ENCODE measurements at regions of chr4 and their contacts with region 1.

Region 1: GRCh38 chr4:3442959-3443749 is 1.4 kb downstream of the HGFAC start:
- DNase-seq: peak; percentile 51
- H3K4me3 Mint-ChIP-seq: no peak overlapping the region
- H3K27ac Mint-ChIP-seq: no peak overlapping the region
- H3K4me1 Mint-ChIP-seq: no peaks in the 10 kb centered on the region
- H3K27me3 Mint-ChIP-seq: no peaks in the 10 kb centered on the region

Region 2: DNA sequence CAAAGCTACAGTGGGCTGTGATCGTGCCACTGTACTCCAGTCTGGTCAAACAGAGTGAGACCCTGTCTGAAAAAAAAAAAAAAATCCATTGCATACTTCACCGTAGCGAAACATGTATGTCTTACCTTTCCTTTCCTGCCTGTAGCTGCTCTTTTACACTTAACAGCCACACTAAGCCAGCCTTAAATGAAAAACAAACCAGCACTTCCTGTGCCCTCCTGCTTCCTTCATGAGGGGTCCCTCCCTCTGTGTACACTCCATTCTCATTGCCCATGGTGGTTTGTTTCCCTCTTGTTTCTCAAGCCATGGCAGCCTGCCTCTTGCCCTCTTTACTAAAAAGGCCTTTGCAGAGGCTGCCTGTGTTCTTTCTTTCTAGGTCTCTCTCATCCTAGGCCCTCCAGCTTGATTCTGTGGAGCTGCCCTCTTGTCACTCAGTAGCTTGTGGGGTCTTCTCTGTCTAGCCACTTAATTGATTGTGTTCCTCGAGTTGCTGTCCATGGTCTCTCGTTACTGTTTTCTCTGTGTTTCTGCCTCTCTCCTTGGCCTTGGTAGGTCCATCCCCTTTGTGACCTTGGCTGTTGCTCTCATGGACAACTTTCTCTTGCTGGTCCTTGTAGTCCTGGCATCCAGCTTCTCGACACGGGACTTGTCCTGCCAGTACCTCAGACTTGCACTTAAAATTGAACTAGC is 246.3 kb before region 1 on chr4:
- intact Hi-C with region 1: loop called (anchors 2 kb)
- DNase-seq: no peak
- H3K4me3 Mint-ChIP-seq: no peak overlapping the region
- H3K27ac Mint-ChIP-seq: peak overlapping the region; percentile 56
- H3K4me1 Mint-ChIP-seq: peaks cover 44% of the 10 kb centered on the region
- H3K27me3 Mint-ChIP-seq: no peaks in the 10 kb centered on the region

Region 3: DNA sequence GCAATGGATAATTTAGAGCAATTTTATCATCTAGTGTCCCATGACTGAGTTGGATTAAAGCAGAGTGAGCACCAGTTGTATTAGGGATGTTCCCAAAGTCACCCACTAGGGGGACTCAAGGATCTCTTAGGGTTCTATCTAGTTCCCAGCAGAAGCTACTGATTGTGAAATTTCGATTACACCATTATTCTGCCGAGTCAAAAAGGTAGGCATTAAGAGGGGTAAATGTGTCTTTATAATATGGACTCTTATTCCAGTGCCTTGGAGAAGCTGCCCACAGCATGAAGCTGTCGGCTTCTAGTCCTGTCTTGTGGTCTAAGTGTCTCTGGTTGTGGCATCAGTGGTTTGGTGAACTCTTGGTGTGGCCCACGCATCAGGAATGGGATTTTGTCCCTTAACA is 97.0 kb before region 1 on chr4:
- intact Hi-C with region 1: loop called (anchors 1 kb)
- DNase-seq: no peak
- H3K4me3 Mint-ChIP-seq: no peak overlapping the region
- H3K27ac Mint-ChIP-seq: no peak overlapping the region
- H3K4me1 Mint-ChIP-seq: peaks cover 17% of the 10 kb centered on the region
- H3K27me3 Mint-ChIP-seq: peaks cover 6% of the 10 kb centered on the region

Region 4: GRCh38 chr4:3388471-3389232 is 54.5 kb before region 1 on chr4:
- intact Hi-C with region 1: no loop called
- DNase-seq: no peak
- H3K4me3 Mint-ChIP-seq: no peak overlapping the region
- H3K27ac Mint-ChIP-seq: no peak overlapping the region
- H3K4me1 Mint-ChIP-seq: peaks cover 11% of the 10 kb centered on the region
- H3K27me3 Mint-ChIP-seq: peaks cover 8% of the 10 kb centered on the region

Measured in activated T-helper 2 cell treated with anti-CD3 and anti-CD28 coated beads, Interferon-gamma antibody, Interleukin-2, Interleukin-4, amounts not matched to agents 10 μg/mL and 5 μg/mL and 100 μg/mL, durations not matched to agents 14 hours and 24 hours and 36 hours (primary cell).